Gastrocnemius medialis (tissue), 4 donors: ENCODE measurements at regions of chr18 and their contacts with region 1.

Region 1: GRCh38 chr18:65206551-65207260 is 544.1 kb upstream of the CDH7 start:
- DNase-seq: no peak
- ATAC-seq: no peak
- H3K4me3 ChIP-seq: no peak overlapping the region
- H3K27ac ChIP-seq: no peak overlapping the region
- H3K4me1 ChIP-seq: no peaks in the 10 kb centered on the region
- H3K27me3 ChIP-seq: no peaks in the 10 kb centered on the region
- CTCF ChIP-seq: no peak
- POLR2A ChIP-seq: no peak

Region 2: GRCh38 chr18:65146482-65147021 is 60.2 kb before region 1 on chr18:
- in situ Hi-C with region 1: loop called in 1 of 4 experiments (anchors 10 kb)
- intact Hi-C with region 1: no loop called
- DNase-seq: no peak
- ATAC-seq: no peak
- H3K4me3 ChIP-seq: no peak overlapping the region
- H3K27ac ChIP-seq: no peak overlapping the region
- H3K4me1 ChIP-seq: no peaks in the 10 kb centered on the region
- H3K27me3 ChIP-seq: no peaks in the 10 kb centered on the region
- CTCF ChIP-seq: no peak
- POLR2A ChIP-seq: no peak

Region 3: DNA sequence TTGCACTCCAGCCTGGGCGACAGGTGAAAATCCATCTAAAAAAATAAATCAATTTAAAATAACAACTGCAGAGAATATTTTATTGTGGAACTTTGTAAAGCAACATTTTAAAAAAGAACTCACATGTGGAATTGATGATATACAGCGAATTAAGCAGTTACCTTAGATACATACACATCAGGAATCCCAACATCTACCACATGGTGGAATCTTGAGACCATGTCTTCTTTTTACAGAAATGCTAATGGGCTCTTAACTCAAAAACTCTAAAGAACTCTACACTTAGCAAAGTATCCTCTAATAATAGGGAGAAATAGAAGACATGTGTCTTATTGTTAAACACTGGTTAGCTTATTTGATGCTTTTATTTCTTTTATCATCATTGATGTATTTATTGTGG is 917.7 kb after region 1 on chr18:
- in situ Hi-C with region 1: no loop called
- intact Hi-C with region 1: no loop called
- DNase-seq: no peak
- ATAC-seq: no peak
- H3K4me3 ChIP-seq: no peak overlapping the region
- H3K27ac ChIP-seq: no peak overlapping the region
- H3K4me1 ChIP-seq: no peaks in the 10 kb centered on the region
- H3K27me3 ChIP-seq: no peaks in the 10 kb centered on the region
- CTCF ChIP-seq: no peak
- POLR2A ChIP-seq: no peak